Endothelial cell of umbilical vein (primary cell): ENCODE measurements at regions of chr7 and their contacts with region 1.

Region 1: GRCh38 chr7:13725591-13725990 is 263.9 kb downstream of the ETV1 start:
- DNase-seq: no peak
- H3K4me3 ChIP-seq: no peak overlapping the region
- H3K27ac ChIP-seq: no peak overlapping the region
- H3K4me1 ChIP-seq: no peaks in the 10 kb centered on the region
- H3K27me3 ChIP-seq: no peaks in the 10 kb centered on the region
- CTCF ChIP-seq: no peak
- POLR2A ChIP-seq: no peak

Region 2: GRCh38 chr7:12647364-12648219 is 1078.0 kb before region 1 on chr7:
- CTCF ChIA-PET with region 1: no interaction called
- POLR2A ChIA-PET with region 1: no interaction called
- dilution Hi-C with region 1: no loop called
- intact Hi-C with region 1: loop called (anchors 10 kb)
- DNase-seq: no peak
- H3K4me3 ChIP-seq: no peak overlapping the region
- H3K27ac ChIP-seq: no peak overlapping the region
- H3K4me1 ChIP-seq: no peaks in the 10 kb centered on the region
- H3K27me3 ChIP-seq: no peaks in the 10 kb centered on the region
- CTCF ChIP-seq: no peak
- POLR2A ChIP-seq: no peak

Region 3: GRCh38 chr7:13279854-13280435 is 445.6 kb before region 1 on chr7:
- CTCF ChIA-PET with region 1: interaction called, 4 read pairs
- POLR2A ChIA-PET with region 1: no interaction called
- dilution Hi-C with region 1: no loop called
- intact Hi-C with region 1: loop called (anchors 2 kb)
- DNase-seq: peak; percentile 24
- H3K4me3 ChIP-seq: no peak overlapping the region
- H3K27ac ChIP-seq: no peak overlapping the region
- H3K4me1 ChIP-seq: no peaks in the 10 kb centered on the region
- H3K27me3 ChIP-seq: no peaks in the 10 kb centered on the region
- CTCF ChIP-seq: peak in 1 of 2 donors; percentile 18
- POLR2A ChIP-seq: no peak

Region 4: DNA sequence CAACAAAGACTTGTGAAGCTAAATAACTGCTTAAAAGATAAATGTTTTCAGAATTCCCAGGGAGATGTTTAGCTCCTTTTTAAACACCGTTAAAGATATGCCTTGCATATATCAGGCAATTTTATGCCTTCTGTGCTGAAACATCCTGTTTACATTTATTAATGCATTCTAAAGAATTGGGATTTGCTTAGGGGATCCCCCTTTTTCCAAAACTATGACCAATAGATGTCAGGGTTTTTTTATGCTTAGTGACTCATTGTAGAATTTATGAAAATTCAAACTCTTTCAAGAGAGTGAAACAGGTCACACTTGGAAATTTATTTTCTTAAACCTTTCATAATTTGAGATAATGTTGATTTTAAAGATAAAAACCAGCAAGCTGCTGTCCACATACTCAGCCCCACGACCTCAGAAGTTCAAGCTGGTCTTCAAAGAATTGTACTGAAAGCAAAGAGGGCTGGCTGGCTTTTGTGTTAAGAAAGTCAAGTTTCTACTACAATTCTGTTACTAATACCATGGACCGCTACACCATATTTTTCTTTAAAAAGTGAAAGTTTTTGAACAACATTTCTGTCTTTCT is 147.9 kb before region 1 on chr7:
- CTCF ChIA-PET with region 1: no interaction called
- POLR2A ChIA-PET with region 1: no interaction called
- dilution Hi-C with region 1: no loop called
- intact Hi-C with region 1: no loop called
- DNase-seq: no peak
- H3K4me3 ChIP-seq: no peak overlapping the region
- H3K27ac ChIP-seq: no peak overlapping the region
- H3K4me1 ChIP-seq: no peaks in the 10 kb centered on the region
- H3K27me3 ChIP-seq: no peaks in the 10 kb centered on the region
- CTCF ChIP-seq: no peak
- POLR2A ChIP-seq: no peak